Endothelial cell of umbilical vein (primary cell): ENCODE measurements at regions of chr10 and their contacts with region 1.

Region 1: DNA sequence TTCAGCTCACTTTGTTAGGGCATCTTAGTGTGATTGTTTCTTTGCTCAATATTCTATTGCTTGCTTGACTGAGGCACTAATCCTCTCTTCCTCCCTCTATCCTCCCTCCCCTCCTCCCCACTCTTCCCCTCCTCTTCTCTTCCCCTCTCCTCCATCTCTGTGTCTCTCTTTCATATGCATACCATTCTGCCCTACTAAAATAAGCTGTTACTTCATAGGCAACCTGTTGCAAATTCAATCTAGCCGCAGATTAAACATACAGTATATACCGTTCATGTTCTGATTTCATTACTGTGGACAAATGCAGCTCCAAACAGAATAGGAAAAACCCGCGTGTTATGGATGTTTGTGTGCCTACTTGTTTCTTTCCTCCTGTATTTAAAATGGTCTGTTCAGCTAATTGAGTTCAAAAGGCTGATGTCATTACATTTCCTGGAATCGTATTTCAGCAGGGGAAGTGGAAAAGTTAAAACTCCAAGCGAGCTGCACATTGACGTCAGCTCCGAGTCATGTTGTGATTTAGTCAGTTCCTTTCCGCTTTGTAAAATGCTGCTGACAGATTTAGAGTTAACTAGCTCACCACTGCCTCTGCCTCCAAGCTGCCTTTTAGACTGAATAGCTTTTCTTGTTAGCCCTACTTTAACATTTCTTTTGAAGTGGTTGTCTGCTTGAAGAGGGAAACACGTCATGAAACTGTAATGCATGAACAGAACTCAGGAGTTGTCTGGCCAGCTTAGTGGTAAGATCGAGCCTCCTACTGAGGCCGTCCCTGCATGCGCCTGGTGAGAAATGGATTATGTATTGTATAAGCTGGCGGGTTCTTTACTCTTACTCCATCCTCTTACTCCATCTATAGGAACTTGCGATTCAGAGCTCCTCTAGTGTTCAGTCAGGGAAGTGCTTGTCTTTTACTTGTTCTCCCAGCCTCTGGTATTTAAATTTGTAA is 69.0 kb downstream of the CREM start:
- DNase-seq: peak; percentile 99
- H3K4me3 ChIP-seq: peak overlapping the region; percentile 39 to 89 (median 67)
- H3K27ac ChIP-seq: peak overlapping the region; percentile 98
- H3K4me1 ChIP-seq: peaks cover 20% of the 10 kb centered on the region
- H3K27me3 ChIP-seq: no peaks in the 10 kb centered on the region
- CTCF ChIP-seq: peak; percentile 68 to 71
- POLR2A ChIP-seq: no peak

Region 2: GRCh38 chr10:34405611-34406462 is 789.8 kb before region 1 on chr10:
- CTCF ChIA-PET with region 1: no interaction called
- POLR2A ChIA-PET with region 1: no interaction called
- dilution Hi-C with region 1: no loop called
- intact Hi-C with region 1: no loop called
- DNase-seq: peak; percentile 80
- H3K4me3 ChIP-seq: peak overlapping the region in 1 of 3 experiments; percentile 22
- H3K27ac ChIP-seq: peak overlapping the region; percentile 55
- H3K4me1 ChIP-seq: peaks cover 24% of the 10 kb centered on the region
- H3K27me3 ChIP-seq: no peaks in the 10 kb centered on the region
- CTCF ChIP-seq: no peak
- POLR2A ChIP-seq: no peak

Region 3: GRCh38 chr10:35119378-35119777 is 76.3 kb before region 1 on chr10:
- CTCF ChIA-PET with region 1: interaction called, 97 read pairs
- POLR2A ChIA-PET with region 1: interaction called, 3 read pairs
- dilution Hi-C with region 1: loop called (anchors 25 kb)
- intact Hi-C with region 1: no loop called
- DNase-seq: no peak
- H3K4me3 ChIP-seq: no peak overlapping the region
- H3K27ac ChIP-seq: no peak overlapping the region
- H3K4me1 ChIP-seq: no peaks in the 10 kb centered on the region
- H3K27me3 ChIP-seq: peaks cover 0 to 2% of the 10 kb centered on the region in 2 experiments
- CTCF ChIP-seq: no peak
- POLR2A ChIP-seq: no peak

Region 4: GRCh38 chr10:35178331-35178730 is 17.3 kb before region 1 on chr10:
- CTCF ChIA-PET with region 1: interaction called, 57 read pairs
- POLR2A ChIA-PET with region 1: interaction called, 11 read pairs
- dilution Hi-C with region 1: no loop called
- intact Hi-C with region 1: no loop called
- DNase-seq: no peak
- H3K4me3 ChIP-seq: no peak overlapping the region
- H3K27ac ChIP-seq: no peak overlapping the region
- H3K4me1 ChIP-seq: no peaks in the 10 kb centered on the region
- H3K27me3 ChIP-seq: no peaks in the 10 kb centered on the region
- CTCF ChIP-seq: no peak
- POLR2A ChIP-seq: no peak

Region 5: GRCh38 chr10:35208536-35208935 is 12.9 kb after region 1 on chr10:
- CTCF ChIA-PET with region 1: interaction called, 48 read pairs
- POLR2A ChIA-PET with region 1: no interaction called
- dilution Hi-C with region 1: no loop called
- intact Hi-C with region 1: no loop called
- DNase-seq: no peak
- H3K4me3 ChIP-seq: no peak overlapping the region
- H3K27ac ChIP-seq: no peak overlapping the region
- H3K4me1 ChIP-seq: no peaks in the 10 kb centered on the region
- H3K27me3 ChIP-seq: no peaks in the 10 kb centered on the region
- CTCF ChIP-seq: no peak
- POLR2A ChIP-seq: no peak

Region 6: DNA sequence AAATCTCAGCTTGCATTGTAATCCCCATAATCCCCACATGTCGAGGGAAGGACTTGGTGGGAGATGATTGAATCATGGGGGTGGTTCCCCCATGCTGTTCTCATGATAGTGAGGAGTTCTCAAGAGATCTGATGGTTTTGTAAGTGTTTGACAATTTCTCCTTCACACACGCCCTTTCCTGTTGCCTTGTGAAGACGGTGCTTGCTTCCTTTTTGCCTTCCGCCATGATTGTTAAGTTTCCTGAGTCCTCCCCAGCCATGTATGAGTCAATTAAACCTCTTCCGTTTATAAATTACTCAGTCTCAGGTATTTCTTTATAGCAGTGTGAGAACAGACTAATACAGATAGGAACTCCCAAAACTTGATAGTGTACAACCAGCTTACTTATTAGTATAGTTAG is 29.6 kb after region 1 on chr10:
- CTCF ChIA-PET with region 1: interaction called, 17 read pairs
- POLR2A ChIA-PET with region 1: no interaction called
- dilution Hi-C with region 1: no loop called
- intact Hi-C with region 1: loop called (anchors 1 kb)
- DNase-seq: peak; percentile 84
- H3K4me3 ChIP-seq: no peak overlapping the region
- H3K27ac ChIP-seq: peak overlapping the region; percentile 30
- H3K4me1 ChIP-seq: peaks cover 18% of the 10 kb centered on the region
- H3K27me3 ChIP-seq: no peaks in the 10 kb centered on the region
- CTCF ChIP-seq: peak in 1 of 2 donors; percentile 9
- POLR2A ChIP-seq: no peak

Region 7: GRCh38 chr10:35668865-35669650 is 473.4 kb after region 1 on chr10:
- CTCF ChIA-PET with region 1: no interaction called
- POLR2A ChIA-PET with region 1: no interaction called
- dilution Hi-C with region 1: no loop called
- intact Hi-C with region 1: no loop called
- DNase-seq: no peak
- H3K4me3 ChIP-seq: no peak overlapping the region
- H3K27ac ChIP-seq: no peak overlapping the region
- H3K4me1 ChIP-seq: no peaks in the 10 kb centered on the region
- H3K27me3 ChIP-seq: peaks cover 4 to 10% of the 10 kb centered on the region in 2 experiments
- CTCF ChIP-seq: no peak
- POLR2A ChIP-seq: no peak